CD8-positive, alpha-beta memory T cell (primary cell): ENCODE measurements at regions of chr16 and their contacts with region 1.

Region 1: GRCh38 chr16:58000706-58001676 is at the start of gene USB1:
- DNase-seq: peak; percentile 79 to 90 (median 87)
- H3K4me3 ChIP-seq: peak within 1 kb of the TSS; percentile 96
- H3K4me3 Mint-ChIP-seq: peak within 1 kb of the TSS; percentile 89 to 97 (median 93)
- H3K27ac ChIP-seq: peak within 1 kb of the TSS; percentile 77
- H3K27ac Mint-ChIP-seq: peak within 1 kb of the TSS; percentile 82 to 96 (median 90)
- H3K4me1 ChIP-seq: peaks cover 41% of the 10 kb centered on the region
- H3K4me1 Mint-ChIP-seq: peaks cover 58 to 77% (median 60%) of the 10 kb centered on the region in 3 donors
- H3K27me3 ChIP-seq: no peaks in the 10 kb centered on the region
- H3K27me3 Mint-ChIP-seq: no peaks in the 10 kb centered on the region
- total RNA-seq, gene USB1: 66.6 to 68.5 TPM

Region 2: GRCh38 chr16:57899771-57900661 is 101.0 kb before region 1 on chr16:
- CTCF ChIA-PET with region 1: interaction called, 38 read pairs
- POLR2A ChIA-PET with region 1: no interaction called
- DNase-seq: peak; percentile 66 to 84 (median 67)
- H3K4me3 ChIP-seq: no peak overlapping the region
- H3K4me3 Mint-ChIP-seq: no peak overlapping the region
- H3K27ac ChIP-seq: no peak overlapping the region
- H3K27ac Mint-ChIP-seq: no peak overlapping the region
- H3K4me1 ChIP-seq: no peaks in the 10 kb centered on the region
- H3K4me1 Mint-ChIP-seq: peaks cover 4 to 6% (median 4%) of the 10 kb centered on the region in 3 donors
- H3K27me3 ChIP-seq: no peaks in the 10 kb centered on the region
- H3K27me3 Mint-ChIP-seq: peaks cover 12 to 29% of the 10 kb centered on the region in 2 donors

Region 3: GRCh38 chr16:57906382-57907316 is 94.3 kb before region 1 on chr16:
- CTCF ChIA-PET with region 1: interaction called, 38 read pairs
- POLR2A ChIA-PET with region 1: no interaction called
- DNase-seq: peak in 3 of 5 donors; percentile 5 to 57 (median 12)
- H3K4me3 ChIP-seq: no peak overlapping the region
- H3K4me3 Mint-ChIP-seq: no peak overlapping the region
- H3K27ac ChIP-seq: no peak overlapping the region
- H3K27ac Mint-ChIP-seq: peak overlapping the region in 1 of 8 donors; percentile 61
- H3K4me1 ChIP-seq: no peaks in the 10 kb centered on the region
- H3K4me1 Mint-ChIP-seq: no peaks in the 10 kb centered on the region
- H3K27me3 ChIP-seq: no peaks in the 10 kb centered on the region
- H3K27me3 Mint-ChIP-seq: peaks cover 5 to 21% of the 10 kb centered on the region in 2 donors

Region 4: DNA sequence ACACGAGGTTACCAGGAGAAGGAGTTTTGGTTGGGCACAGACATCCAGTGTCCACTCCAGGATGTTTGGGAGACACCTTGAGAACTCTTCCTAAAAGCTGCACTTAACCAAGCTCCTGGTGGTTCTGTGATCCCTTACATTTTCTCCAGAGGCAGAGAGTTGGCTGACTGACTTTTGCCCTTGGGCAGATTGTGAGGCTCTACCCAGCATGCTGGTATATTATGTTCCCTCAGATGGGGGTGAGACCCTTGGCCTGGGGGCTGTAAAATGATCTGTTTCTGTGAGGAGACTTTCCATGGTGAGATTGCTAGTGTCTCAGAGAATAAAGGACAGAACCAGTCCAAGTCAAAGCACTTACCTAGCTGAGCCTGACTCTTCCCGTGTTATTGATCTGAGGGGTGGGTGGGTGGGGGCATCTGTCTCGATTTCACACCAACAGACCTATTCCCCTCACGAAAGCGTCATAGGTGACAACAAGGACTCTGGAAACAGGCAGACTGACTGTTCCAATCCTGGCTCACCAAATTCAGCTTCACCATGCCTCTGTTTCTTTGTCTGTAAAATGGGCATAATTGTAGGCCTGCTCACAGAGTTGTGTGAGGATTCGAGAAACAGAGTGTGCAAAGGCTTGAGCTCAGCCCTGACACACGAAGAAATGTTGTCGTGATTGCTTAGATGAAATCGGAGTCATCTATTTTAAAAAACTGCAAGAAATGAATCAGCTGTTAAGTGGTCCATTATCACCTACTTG is 12.4 kb after region 1 on chr16:
- CTCF ChIA-PET with region 1: interaction called, 10 read pairs
- POLR2A ChIA-PET with region 1: no interaction called
- DNase-seq: no peak
- H3K4me3 ChIP-seq: no peak overlapping the region
- H3K4me3 Mint-ChIP-seq: no peak overlapping the region
- H3K27ac ChIP-seq: no peak overlapping the region
- H3K27ac Mint-ChIP-seq: no peak overlapping the region
- H3K4me1 ChIP-seq: no peaks in the 10 kb centered on the region
- H3K4me1 Mint-ChIP-seq: peaks cover 0 to 4% (median 0%) of the 10 kb centered on the region in 3 donors
- H3K27me3 ChIP-seq: no peaks in the 10 kb centered on the region
- H3K27me3 Mint-ChIP-seq: no peaks in the 10 kb centered on the region